ENCODE measurements at regions of chr9 and their contacts with region 1.

Region 1: DNA sequence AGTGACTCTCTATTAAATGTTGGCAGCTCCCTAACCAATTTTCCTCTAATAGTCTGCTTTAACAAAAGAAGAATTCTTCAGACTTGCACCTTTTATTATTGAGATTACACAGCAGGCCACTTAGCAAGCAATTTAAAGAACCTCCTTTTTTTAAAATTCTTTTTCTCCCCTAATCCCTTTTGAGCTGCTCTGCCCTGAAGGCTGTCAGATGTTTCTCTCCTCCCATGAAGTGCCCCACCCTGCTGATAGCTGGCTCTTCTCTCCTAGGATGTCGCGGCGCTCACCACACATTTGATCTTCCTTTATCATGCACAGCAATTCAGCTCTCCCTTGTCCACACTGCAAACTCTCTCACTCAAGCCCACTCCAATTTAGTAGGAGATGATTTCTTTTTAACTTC is 1471.1 kb upstream of the ACO1 start:
- DNase-seq: no peak
- ATAC-seq: no peak
- H3K4me3 ChIP-seq: no peak overlapping the region
- H3K27ac ChIP-seq: no peak overlapping the region
- H3K4me1 ChIP-seq: no peaks in the 10 kb centered on the region
- H3K27me3 ChIP-seq: no peaks in the 10 kb centered on the region
- CTCF ChIP-seq: no peak
- POLR2A ChIP-seq: no peak

Region 2: GRCh38 chr9:30673132-30673531 is 240.2 kb before region 1 on chr9:
- intact Hi-C with region 1: no loop called
- DNase-seq: no peak
- ATAC-seq: no peak
- H3K4me3 ChIP-seq: no peak overlapping the region
- H3K27ac ChIP-seq: no peak overlapping the region
- H3K4me1 ChIP-seq: no peaks in the 10 kb centered on the region
- H3K27me3 ChIP-seq: no peaks in the 10 kb centered on the region
- CTCF ChIP-seq: no peak
- POLR2A ChIP-seq: no peak

Region 3: GRCh38 chr9:30851600-30851999 is 61.7 kb before region 1 on chr9:
- intact Hi-C with region 1: loop called in 1 of 10 experiments (anchors 10 kb)
- DNase-seq: no peak
- ATAC-seq: no peak
- H3K4me3 ChIP-seq: no peak overlapping the region
- H3K27ac ChIP-seq: no peak overlapping the region
- H3K4me1 ChIP-seq: no peaks in the 10 kb centered on the region
- H3K27me3 ChIP-seq: no peaks in the 10 kb centered on the region
- CTCF ChIP-seq: no peak
- POLR2A ChIP-seq: no peak

Region 4: DNA sequence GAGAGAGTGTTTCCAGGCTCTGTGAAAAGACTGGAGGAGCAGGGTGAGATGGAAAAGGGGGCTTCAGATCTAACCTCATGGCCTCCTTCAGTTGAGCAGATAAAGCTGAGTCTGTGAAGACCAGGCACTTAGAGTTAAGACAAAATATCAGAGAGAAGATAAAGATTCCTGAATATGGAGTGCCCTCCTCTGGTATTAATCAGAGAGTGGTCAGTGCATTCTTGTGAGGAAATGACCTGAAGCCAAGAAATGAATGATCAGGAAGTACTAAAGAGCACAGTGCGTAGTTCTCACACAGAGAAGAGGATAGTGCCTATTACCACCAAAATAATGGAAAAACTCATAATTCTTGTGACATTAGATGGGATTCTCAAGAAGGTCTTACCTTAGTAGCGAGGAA is 54.2 kb after region 1 on chr9:
- intact Hi-C with region 1: no loop called
- DNase-seq: no peak
- ATAC-seq: no peak
- H3K4me3 ChIP-seq: no peak overlapping the region
- H3K27ac ChIP-seq: no peak overlapping the region
- H3K4me1 ChIP-seq: no peaks in the 10 kb centered on the region
- H3K27me3 ChIP-seq: no peaks in the 10 kb centered on the region
- CTCF ChIP-seq: no peak
- POLR2A ChIP-seq: no peak

Region 5: DNA sequence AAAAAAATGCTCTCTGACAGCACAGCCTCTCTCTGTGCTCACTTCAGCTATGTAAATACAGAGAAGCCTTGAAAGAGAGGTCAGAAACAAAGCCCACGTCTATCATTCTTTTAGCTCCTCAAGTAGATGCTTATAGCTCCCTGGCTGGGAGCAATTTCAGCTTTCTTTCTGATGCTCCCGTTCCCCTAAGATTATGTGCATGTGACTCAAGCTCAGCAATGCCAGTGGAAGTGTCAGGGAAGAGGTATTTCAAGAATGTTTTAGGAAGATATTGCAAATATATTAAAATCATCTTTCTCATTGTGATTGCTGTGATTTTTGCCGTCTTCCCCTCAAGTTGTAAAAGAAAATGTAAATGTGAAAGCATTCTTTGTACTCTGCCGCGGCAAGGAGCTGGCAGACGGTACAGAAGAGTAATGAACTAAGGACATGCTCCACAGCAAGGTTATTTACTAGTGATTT is 117.4 kb after region 1 on chr9:
- intact Hi-C with region 1: no loop called
- DNase-seq: no peak
- ATAC-seq: no peak
- H3K4me3 ChIP-seq: peak overlapping the region in 3 of 12 donors; percentile 8 to 19 (median 16)
- H3K27ac ChIP-seq: no peak overlapping the region
- H3K4me1 ChIP-seq: no peaks in the 10 kb centered on the region
- H3K27me3 ChIP-seq: no peaks in the 10 kb centered on the region
- CTCF ChIP-seq: no peak
- POLR2A ChIP-seq: no peak

Measured in heart left ventricle (tissue), 16 donors.